PC-3 (cell line): ENCODE measurements at regions of chr1 and their contacts with region 1.

Region 1: DNA sequence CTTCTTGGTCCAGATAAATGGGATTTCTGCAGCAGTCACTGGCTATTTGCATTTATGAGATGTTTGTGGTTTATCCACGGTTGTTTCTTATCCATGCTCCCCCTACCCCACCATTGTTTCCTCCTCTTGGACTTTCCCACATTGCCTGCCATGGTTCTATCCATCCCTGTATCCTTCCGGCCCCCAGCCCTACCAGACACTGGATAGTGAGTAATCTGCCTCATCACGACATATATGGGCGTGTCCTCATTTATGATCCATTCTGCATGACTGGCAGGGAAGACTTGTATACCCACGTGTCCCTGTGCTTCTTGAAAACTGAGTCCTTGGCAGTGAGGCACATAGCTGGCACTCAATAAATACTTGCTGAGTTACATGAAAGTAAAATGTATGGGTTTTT is 40.1 kb downstream of the CACNA1S start:
- DNase-seq: peak; percentile 97
- ATAC-seq: peak; percentile 91
- H3K4me3 ChIP-seq: no peak overlapping the region
- H3K27ac ChIP-seq: no peak overlapping the region
- H3K4me1 ChIP-seq: peaks cover 9% of the 10 kb centered on the region
- H3K27me3 ChIP-seq: peaks cover 45% of the 10 kb centered on the region
- CTCF ChIP-seq: no peak

Region 2: DNA sequence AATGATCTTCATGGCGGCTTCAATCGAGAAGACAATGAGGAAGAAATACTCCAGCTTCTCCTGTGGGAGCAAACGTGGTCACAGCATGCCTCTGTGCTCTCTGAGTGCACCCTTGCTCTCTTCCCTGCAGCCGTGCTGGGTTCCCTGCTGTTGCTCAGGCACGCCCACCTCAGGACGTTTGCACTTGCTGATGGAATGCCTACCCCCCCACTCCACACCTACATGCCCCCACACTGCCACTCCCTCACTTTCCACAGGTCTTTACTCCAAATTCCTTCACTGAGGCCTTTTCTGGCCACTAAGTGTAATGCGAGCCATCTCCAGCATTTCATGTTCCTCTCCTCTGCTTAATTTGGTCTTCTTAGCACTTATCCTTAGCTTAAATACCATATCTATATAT is 21.8 kb after region 1 on chr1:
- CTCF ChIA-PET with region 1: no interaction called
- POLR2A ChIA-PET with region 1: no interaction called
- intact Hi-C with region 1: no loop called
- DNase-seq: no peak
- ATAC-seq: no peak
- H3K4me3 ChIP-seq: no peak overlapping the region
- H3K27ac ChIP-seq: no peak overlapping the region
- H3K4me1 ChIP-seq: no peaks in the 10 kb centered on the region
- H3K27me3 ChIP-seq: peaks cover 66% of the 10 kb centered on the region
- CTCF ChIP-seq: no peak

Region 3: DNA sequence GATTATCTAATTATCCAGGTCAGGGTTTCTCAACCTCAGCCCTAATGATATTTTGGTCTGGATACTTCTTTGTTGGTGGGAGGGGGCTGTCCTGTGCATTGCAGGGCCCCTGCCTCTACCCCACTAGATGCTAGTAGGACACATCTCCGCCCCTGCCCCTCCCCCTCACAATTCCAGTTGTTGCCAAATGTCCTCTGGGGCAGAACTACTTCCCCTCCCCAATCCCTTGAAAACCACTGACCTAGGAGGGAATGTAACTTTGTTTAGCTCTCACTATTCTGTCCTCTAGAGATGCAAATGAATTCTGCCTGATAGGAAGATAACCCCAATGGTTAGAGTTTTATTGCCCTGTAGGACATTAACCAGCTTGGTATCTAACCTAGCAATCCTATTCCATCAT is 32.0 kb after region 1 on chr1:
- CTCF ChIA-PET with region 1: interaction called, 3 read pairs
- POLR2A ChIA-PET with region 1: interaction called, 12 read pairs
- intact Hi-C with region 1: no loop called
- DNase-seq: no peak
- ATAC-seq: no peak
- H3K4me3 ChIP-seq: no peak overlapping the region
- H3K27ac ChIP-seq: no peak overlapping the region
- H3K4me1 ChIP-seq: no peaks in the 10 kb centered on the region
- H3K27me3 ChIP-seq: peaks cover 61% of the 10 kb centered on the region
- CTCF ChIP-seq: no peak